SK-N-SH (cell line): ENCODE measurements at regions of chr11 and their contacts with region 1.

Region 1: DNA sequence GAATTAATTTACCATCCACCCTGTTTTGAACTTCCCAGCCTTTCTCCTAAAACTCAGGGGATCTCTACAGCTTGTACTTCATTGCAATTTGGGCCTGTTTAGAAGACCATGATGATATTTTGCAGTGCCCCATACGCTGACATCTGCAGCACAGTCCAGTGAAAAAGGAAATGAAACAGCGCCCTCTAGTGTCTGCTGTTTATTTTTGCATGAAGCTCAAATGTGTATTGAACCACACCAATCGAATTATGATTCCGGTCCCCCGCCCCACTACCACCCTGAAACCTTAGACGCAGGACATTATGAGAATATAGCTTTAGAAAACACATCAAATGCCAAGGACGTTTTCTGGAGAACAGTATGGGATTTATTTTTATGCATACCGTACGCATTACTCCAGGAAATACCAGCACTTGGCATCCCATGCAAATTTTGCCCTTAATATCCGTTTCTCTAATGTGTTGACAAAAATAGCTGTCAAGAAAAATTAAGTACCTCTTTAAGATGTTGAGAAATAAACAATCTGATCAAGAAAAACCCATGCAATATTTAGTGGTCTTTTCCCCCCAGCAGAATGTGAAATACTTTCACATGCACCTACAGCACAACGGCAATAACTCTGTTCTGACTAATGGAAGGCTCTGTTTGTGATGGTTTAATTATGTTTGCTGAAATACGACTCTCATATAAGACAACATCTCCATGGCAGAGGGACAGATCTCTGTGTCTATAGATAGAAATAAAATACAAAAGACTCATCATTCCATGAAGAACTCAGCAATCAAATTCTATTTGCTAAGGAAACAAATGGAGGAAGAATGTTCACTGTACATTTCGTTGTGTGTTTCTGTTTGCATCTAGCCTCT is 93.9 kb downstream of the TECTA start:
- DNase-seq: peak; percentile 69
- H3K4me3 ChIP-seq: no peak overlapping the region; a peak in 1 of 4 replicates
- H3K27ac ChIP-seq: no peak overlapping the region
- H3K4me1 ChIP-seq: peaks cover 0 to 2% of the 10 kb centered on the region in 2 experiments; a peak in 2 of 4 replicates
- H3K27me3 ChIP-seq: no peaks in the 10 kb centered on the region; the same call in 1 of the 2 replicates
- CTCF ChIP-seq: peak; percentile 90
- EP300 ChIP-seq: no peak
- RAD21 ChIP-seq: peak; percentile 86

Region 2: DNA sequence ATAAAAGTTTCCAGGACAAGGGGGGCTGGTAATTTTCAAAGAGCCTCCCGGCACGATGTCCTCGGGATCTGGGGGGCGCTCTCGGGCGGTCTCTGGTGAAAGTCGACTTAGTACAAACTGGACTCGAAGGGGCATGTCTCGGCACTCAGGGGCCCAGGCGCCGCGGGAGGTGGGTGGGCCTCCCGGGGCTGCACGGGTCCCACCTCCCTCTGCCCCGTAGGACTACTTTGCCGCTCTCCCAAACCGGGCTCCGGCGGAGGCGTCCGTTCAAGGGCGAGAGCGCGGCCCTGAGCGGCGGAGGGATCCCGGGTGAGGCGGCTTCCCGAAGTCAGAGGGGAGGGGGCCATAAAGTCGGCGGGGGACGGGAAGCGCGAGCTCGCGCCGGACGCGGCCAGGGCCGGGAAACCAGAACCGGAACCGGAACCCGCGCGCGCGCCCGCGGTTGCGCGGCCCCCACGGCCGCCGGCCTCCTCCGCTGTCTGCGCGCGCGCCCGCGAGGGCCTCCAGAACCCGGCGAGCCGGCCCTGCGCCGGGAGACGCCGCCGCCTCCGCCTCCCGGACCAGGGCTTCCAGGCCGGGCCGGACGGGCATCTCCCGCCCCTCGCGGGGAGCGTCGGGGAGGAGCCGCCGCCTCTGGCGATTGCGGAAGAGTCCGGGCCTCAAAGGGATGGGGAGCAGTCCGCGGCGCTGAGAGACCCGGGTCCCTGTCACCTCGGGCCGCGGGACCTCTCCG is 858.9 kb before region 1 on chr11 and contains the start of gene ARHGEF12:
- CTCF ChIA-PET with region 1: interaction called, 13 read pairs
- POLR2A ChIA-PET with region 1: no interaction called
- DNase-seq: peak; percentile 98
- H3K4me3 ChIP-seq: peak within 1 kb of the TSS; percentile 91 to 93
- H3K27ac ChIP-seq: peak within 1 kb of the TSS; percentile 81 to 92
- H3K4me1 ChIP-seq: peaks cover 13 to 34% of the 10 kb centered on the region in 2 experiments
- H3K27me3 ChIP-seq: no peaks in the 10 kb centered on the region
- CTCF ChIP-seq: peak; percentile 73
- EP300 ChIP-seq: peak; percentile 41 to 61; a peak in 1 of 4 replicates
- RAD21 ChIP-seq: no peak
- polyA plus RNA-seq, gene ARHGEF12: 12.3 and 15.9 TPM in 2 replicates

Region 3: GRCh38 chr11:120941000-120941399 is 254.0 kb before region 1 on chr11:
- CTCF ChIA-PET with region 1: interaction called, 10 read pairs
- POLR2A ChIA-PET with region 1: no interaction called
- DNase-seq: no peak
- H3K4me3 ChIP-seq: no peak overlapping the region
- H3K27ac ChIP-seq: no peak overlapping the region
- H3K4me1 ChIP-seq: peaks cover 0 to 6% of the 10 kb centered on the region in 2 experiments; a peak in 1 of 4 replicates
- H3K27me3 ChIP-seq: no peaks in the 10 kb centered on the region; the same call in 1 of the 2 replicates
- CTCF ChIP-seq: no peak
- EP300 ChIP-seq: no peak
- RAD21 ChIP-seq: no peak

Region 4: DNA sequence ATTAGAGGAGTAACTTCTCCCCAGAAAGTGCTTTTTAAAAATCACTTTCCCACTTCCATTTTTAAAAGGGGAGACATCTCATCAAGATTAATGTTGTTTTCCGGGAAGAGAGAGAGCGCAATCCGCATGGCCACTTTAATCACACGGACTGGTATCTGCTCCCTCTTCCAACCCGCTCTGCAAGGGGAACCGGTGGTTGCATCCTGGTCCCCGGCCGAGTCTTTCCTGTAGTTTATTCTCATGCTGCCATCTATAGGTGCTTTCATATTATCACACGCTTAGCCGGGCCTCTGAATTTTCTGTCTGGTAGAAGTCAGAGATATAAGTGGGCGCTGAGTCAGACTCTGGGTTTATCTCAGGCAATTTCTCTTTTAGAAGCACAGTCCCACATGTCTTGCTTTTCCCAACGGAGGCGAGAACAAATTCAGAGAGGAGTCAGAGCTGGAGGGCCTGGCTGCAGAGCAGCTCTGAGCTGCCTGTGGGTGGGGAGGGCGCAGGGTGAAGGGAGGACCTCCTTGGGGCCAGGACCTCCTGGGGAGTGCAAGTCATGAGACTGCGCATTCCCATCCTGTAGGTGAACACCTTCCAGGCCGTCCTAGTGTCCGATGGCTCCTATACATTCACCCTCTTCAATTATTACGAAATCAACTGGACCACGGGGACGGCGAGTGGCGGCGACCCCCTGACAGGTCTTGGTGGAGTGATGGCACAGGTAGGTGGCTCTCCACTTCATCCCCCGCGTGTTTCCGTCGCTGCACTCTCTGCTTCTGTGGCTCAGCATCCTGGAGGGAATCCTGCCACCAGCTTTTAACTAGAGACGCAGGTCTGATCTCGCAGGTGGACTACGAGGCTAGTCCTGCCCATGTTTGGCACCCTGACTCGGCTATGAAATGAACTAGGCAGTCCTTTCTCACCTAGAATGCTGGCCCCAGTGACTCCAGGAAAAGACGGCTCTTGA is 82.2 kb before region 1 on chr11:
- CTCF ChIA-PET with region 1: interaction called, 37 read pairs
- POLR2A ChIA-PET with region 1: no interaction called
- DNase-seq: peak; percentile 85
- H3K4me3 ChIP-seq: no peak overlapping the region; a peak in 1 of 4 replicates
- H3K27ac ChIP-seq: no peak overlapping the region
- H3K4me1 ChIP-seq: peaks cover 0 to 17% of the 10 kb centered on the region in 2 experiments; a peak in 2 of 4 replicates
- H3K27me3 ChIP-seq: no peaks in the 10 kb centered on the region
- CTCF ChIP-seq: peak; percentile 63
- EP300 ChIP-seq: peak in 1 of 2 experiments; percentile 36; a peak in 1 of 4 replicates
- RAD21 ChIP-seq: peak; percentile 94

Region 5: DNA sequence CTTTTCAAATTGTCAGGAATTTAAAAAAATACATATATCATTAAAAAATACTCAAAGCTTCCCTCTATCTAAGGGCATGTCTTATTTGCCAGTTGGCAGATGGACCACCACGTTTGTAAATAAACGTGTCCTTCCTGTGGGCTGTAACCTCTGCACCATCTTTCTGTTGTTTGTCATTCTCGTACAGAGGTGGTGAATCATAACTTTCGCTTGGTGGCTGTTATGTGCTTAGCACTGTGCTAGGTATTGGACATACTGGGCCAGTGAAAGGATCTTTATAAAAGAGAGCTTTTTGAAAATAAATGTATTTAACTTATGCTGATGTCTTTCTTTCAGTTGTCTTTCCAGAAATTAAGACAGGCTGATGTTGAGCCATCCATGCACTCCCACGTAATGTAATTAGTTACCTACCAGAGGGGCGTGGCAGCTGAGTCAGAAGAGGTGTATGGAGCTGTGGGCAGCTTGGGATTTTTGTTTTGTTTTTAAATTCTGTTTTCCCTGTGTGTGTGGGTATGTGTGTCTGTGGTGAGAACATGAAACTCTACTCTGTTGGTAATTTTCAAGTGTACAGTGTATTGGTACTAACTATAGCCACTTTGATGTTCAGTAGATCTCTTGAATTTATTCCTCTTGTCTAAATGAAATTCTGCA is 31.2 kb before region 1 on chr11:
- CTCF ChIA-PET with region 1: interaction called, 12 read pairs
- POLR2A ChIA-PET with region 1: no interaction called
- DNase-seq: no peak
- H3K4me3 ChIP-seq: no peak overlapping the region
- H3K27ac ChIP-seq: no peak overlapping the region
- H3K4me1 ChIP-seq: no peaks in the 10 kb centered on the region
- H3K27me3 ChIP-seq: no peaks in the 10 kb centered on the region
- CTCF ChIP-seq: no peak
- EP300 ChIP-seq: no peak
- RAD21 ChIP-seq: no peak

Region 6: DNA sequence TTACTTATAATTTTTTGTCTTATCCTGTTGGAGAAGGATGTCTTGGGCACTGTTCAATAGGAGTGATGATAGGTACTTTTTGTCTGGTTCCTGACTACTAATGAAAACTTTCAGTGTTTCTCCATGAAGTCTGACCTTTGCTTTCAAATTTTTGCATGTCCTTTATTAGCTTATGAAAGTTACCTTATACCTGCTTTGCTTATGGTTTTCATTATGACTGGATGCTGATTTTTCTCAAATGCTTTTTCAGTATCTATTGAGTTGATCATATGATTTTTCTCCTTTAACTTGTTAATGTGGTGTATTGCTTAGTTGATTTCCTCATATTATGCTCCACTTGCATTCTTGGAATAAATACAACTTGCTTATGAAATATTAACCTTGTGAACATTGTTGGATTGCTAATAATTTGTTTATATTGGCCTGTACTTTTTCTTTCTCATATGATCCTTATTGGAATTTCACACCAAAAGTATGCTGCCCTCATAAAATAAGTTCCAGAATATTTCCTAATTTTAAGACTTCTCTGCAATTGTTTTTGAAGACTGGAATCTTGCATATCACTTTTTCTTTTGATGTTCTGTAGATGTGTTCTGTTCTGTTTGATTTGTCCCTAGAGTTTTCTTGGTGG is 12.6 kb after region 1 on chr11:
- CTCF ChIA-PET with region 1: interaction called, 21 read pairs
- POLR2A ChIA-PET with region 1: no interaction called
- DNase-seq: no peak
- H3K4me3 ChIP-seq: no peak overlapping the region
- H3K27ac ChIP-seq: no peak overlapping the region
- H3K4me1 ChIP-seq: no peaks in the 10 kb centered on the region
- H3K27me3 ChIP-seq: no peaks in the 10 kb centered on the region
- CTCF ChIP-seq: no peak
- EP300 ChIP-seq: no peak
- RAD21 ChIP-seq: no peak

Region 7: DNA sequence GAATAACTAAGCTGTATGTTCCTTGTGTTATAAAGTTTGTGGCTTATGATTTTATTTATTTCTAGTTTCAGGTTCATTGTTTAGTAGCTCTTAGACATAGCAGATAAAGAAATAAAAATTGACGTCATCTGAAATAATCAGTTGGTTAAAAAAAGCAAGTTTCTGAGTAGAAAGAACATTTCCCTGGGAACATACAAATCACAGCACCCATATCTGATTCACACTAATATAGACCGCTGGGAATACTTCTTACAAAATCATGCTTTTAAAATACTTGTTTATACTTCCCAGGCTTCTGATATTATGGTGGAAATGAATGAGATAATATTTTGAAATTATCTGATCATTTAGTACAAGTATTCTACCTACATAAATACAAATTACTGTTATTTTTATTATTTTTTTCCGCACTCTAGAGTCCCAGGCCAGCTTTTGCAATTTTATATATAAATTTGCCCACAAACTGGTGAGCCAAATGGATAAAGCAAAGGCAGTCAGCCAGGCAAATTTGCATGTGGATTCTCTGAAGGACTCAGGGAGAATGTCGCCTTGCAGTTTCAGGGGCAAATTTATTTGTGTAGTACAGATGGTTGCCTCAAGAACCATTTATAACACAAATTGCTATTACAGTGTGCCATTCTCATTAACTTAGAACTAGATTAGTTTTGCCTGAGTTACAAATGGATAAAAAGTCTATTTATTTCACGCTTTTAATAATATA is 34.7 kb after region 1 on chr11:
- CTCF ChIA-PET with region 1: interaction called, 10 read pairs
- POLR2A ChIA-PET with region 1: no interaction called
- DNase-seq: no peak
- H3K4me3 ChIP-seq: no peak overlapping the region
- H3K27ac ChIP-seq: no peak overlapping the region
- H3K4me1 ChIP-seq: no peaks in the 10 kb centered on the region; a peak in 1 of 4 replicates
- H3K27me3 ChIP-seq: no peaks in the 10 kb centered on the region
- CTCF ChIP-seq: no peak
- EP300 ChIP-seq: no peak
- RAD21 ChIP-seq: no peak